ENCODE measurements at regions of chr2 and their contacts with region 1.

Region 1: GRCh38 chr2:24613154-24613814 is 122.2 kb downstream of the NCOA1 start:
- DNase-seq: peak; percentile 10 to 61
- H3K4me3 ChIP-seq: no peak overlapping the region
- H3K27ac ChIP-seq: peak overlapping the region; percentile 67; the same call in 1 of the 2 replicates
- H3K4me1 ChIP-seq: peaks cover 2 to 13% (median 4%) of the 10 kb centered on the region in 4 experiments
- H3K27me3 ChIP-seq: no peaks in the 10 kb centered on the region
- CTCF ChIP-seq: peak in 2 of 3 experiments; percentile 73 to 78; a peak in 3 of 4 replicates
- EP300 ChIP-seq: peak in 1 of 2 experiments; percentile 32; a peak in 1 of 3 replicates
- POLR2A ChIP-seq: no peak
- RAD21 ChIP-seq: peak; percentile 77 to 84

Region 2: DNA sequence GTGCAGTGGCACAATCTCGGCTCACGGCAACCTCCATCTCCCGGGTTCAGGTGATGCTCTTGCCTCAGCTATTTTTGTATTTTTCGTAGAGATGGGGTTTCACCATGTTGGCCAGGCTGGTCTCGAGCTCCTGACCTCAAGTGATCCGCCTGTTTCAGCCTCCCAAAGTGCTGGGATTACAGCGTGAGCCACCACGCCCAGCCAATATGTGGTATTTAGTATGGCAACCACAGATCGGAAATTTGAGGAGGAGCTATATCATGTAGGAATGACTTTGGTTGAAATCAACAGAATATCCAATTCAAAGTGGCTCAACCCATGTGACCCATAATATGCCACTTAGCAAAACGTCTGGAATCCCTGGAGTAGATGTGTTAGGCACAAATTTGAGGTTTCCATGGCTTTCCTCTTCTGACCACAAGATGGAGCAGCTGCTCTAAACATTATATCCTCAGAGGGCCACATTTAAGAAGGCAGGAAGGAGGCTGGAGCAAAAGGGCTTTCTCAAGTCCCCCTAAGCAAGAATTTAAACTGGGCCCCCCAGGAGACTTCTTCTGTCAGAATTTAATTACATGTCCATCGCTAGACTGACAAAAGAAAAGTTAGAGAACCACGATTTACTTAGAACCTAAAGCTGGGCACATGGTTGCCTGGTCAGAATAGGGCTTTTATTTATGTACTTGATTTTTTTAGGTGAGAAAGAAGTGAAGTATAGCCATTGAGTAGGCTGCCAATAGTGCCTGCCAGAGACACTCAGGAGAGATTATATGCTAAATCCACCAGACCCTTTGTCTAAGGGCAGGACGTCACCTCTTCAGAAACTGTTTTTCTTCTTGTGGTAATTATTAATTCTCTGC is 203.4 kb before region 1 on chr2:
- CTCF ChIA-PET with region 1: interaction called, 10 read pairs
- POLR2A ChIA-PET with region 1: no interaction called
- DNase-seq: no peak
- H3K4me3 ChIP-seq: no peak overlapping the region
- H3K27ac ChIP-seq: no peak overlapping the region
- H3K4me1 ChIP-seq: peaks cover 0 to 7% (median 3%) of the 10 kb centered on the region in 4 experiments; a peak in 2 of 7 replicates
- H3K27me3 ChIP-seq: no peaks in the 10 kb centered on the region
- CTCF ChIP-seq: peak in 2 of 3 experiments; percentile 76 to 90; a peak in 3 of 4 replicates
- EP300 ChIP-seq: no peak
- POLR2A ChIP-seq: no peak
- RAD21 ChIP-seq: peak; percentile 90 to 97

Region 3: DNA sequence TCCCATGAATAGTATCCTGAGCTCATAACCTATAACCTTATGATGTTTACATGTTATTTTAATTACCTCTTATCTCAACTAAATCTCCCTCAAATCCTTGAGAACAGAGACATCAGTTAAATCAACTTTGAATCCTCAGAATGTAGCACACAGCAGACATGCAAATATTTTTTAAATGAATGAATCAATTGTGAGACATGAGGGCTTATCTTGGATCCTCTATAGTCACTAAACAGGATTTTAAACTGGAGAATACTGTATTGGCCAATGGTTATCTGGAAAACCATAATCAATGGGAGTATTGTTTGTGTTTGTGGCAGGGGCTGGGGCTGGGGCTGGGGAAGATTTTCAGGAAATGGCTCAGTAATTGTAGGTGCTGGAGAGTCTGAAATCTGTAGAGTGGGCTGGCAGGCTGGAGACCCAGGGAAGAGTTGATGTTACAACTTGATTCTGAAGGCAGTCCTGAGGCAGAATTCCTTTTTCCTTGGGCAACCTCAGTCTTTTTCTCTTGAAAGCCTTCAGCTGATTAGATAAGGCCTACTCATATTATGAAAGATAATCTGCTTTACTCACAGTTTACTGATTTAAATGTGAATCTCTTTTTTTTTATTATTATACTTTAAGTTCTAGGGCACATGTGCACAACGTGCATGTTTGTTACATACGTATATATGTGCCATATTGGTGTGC is 16.0 kb before region 1 on chr2:
- CTCF ChIA-PET with region 1: interaction called, 15 read pairs
- POLR2A ChIA-PET with region 1: no interaction called
- DNase-seq: no peak
- H3K4me3 ChIP-seq: no peak overlapping the region
- H3K27ac ChIP-seq: no peak overlapping the region
- H3K4me1 ChIP-seq: peaks cover 0 to 4% (median under 1%) of the 10 kb centered on the region in 4 experiments; a peak in 3 of 7 replicates
- H3K27me3 ChIP-seq: no peaks in the 10 kb centered on the region
- CTCF ChIP-seq: no peak
- EP300 ChIP-seq: no peak
- POLR2A ChIP-seq: no peak
- RAD21 ChIP-seq: no peak

Region 4: GRCh38 chr2:24626131-24626530 is 12.8 kb after region 1 on chr2:
- CTCF ChIA-PET with region 1: interaction called, 22 read pairs
- POLR2A ChIA-PET with region 1: no interaction called
- DNase-seq: no peak
- H3K4me3 ChIP-seq: no peak overlapping the region
- H3K27ac ChIP-seq: no peak overlapping the region
- H3K4me1 ChIP-seq: no peaks in the 10 kb centered on the region; a peak in 1 of 7 replicates
- H3K27me3 ChIP-seq: no peaks in the 10 kb centered on the region
- CTCF ChIP-seq: no peak
- EP300 ChIP-seq: no peak
- POLR2A ChIP-seq: no peak
- RAD21 ChIP-seq: no peak

Region 5: GRCh38 chr2:24657818-24658217 is 44.5 kb after region 1 on chr2:
- CTCF ChIA-PET with region 1: no interaction called
- POLR2A ChIA-PET with region 1: no interaction called
- DNase-seq: no peak
- H3K4me3 ChIP-seq: no peak overlapping the region
- H3K27ac ChIP-seq: no peak overlapping the region
- H3K4me1 ChIP-seq: no peaks in the 10 kb centered on the region; a peak in 1 of 7 replicates
- H3K27me3 ChIP-seq: no peaks in the 10 kb centered on the region
- CTCF ChIP-seq: no peak
- EP300 ChIP-seq: no peak
- POLR2A ChIP-seq: no peak
- RAD21 ChIP-seq: no peak

Region 6: GRCh38 chr2:24739354-24740025 is 126.2 kb after region 1 on chr2:
- CTCF ChIA-PET with region 1: no interaction called
- POLR2A ChIA-PET with region 1: no interaction called
- DNase-seq: no peak
- H3K4me3 ChIP-seq: no peak overlapping the region
- H3K27ac ChIP-seq: no peak overlapping the region
- H3K4me1 ChIP-seq: no peaks in the 10 kb centered on the region
- H3K27me3 ChIP-seq: no peaks in the 10 kb centered on the region
- CTCF ChIP-seq: no peak
- EP300 ChIP-seq: no peak
- POLR2A ChIP-seq: no peak
- RAD21 ChIP-seq: no peak

Region 7: DNA sequence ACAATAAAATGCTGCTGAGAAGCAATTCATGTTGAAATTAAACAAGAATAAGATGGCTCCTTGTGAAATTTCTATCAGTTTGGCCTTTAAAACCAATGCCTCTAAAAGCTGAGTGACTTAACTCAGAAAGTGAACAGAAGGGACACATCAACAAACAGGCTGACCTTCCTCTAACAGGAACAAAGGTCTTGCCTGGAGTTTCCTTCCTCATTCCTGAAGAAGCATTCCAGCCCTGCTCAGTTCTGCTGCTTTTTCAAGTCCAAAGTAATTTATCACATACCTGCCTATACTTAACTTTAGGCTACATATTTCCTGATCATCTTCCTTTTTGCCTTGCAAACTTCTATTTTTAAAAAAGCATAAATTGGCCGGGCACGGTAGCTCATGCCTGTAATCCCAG is 165.8 kb after region 1 on chr2:
- CTCF ChIA-PET with region 1: interaction called, 13 read pairs
- POLR2A ChIA-PET with region 1: no interaction called
- DNase-seq: peak in 1 of 2 experiments; percentile 16
- H3K4me3 ChIP-seq: no peak overlapping the region
- H3K27ac ChIP-seq: no peak overlapping the region
- H3K4me1 ChIP-seq: peaks cover 0 to 5% (median 0%) of the 10 kb centered on the region in 4 experiments; a peak in 2 of 7 replicates
- H3K27me3 ChIP-seq: no peaks in the 10 kb centered on the region
- CTCF ChIP-seq: no peak
- EP300 ChIP-seq: no peak
- POLR2A ChIP-seq: no peak
- RAD21 ChIP-seq: no peak

Region 8: DNA sequence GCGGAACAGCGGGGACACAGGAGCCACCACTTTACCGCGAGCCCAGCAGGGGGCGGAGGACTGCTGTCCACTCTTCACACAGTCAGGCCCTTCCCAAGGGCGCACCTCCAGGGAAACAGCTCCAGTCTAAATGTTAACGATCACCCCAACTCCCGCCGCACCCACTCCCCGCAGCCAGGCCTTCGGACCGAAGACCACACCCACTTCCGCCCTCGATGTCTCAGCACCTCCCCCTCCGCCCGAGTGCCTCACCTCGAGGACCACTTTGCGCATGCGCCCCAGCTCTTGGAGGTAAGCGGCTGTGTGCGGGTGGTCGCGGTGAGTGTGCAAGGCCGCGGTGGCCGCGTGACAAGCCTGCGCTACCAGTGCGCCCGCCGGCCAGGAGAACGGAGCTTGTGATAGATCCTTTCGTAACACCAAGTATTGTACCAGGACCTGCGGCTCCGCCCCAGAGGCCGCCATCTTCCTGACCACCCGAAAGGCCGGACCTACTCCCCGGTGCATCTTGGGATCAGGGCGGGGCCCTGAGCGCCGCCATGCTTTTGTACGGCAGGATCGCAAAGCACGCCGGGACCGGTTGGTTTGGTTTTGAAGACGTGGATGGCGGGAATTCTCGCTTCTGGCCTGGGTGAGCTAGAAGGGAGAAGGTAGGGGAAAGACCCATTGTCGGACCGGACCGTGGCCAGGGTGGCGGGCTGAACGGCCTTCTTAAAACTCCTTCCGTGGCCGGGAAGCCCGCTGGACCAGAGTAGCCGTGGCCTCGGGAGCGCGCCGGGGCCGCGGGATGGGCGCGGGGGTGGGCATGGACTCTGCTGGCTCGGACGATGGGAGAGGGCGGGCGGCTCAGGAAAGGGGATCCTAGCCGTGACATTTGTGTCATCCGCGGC is 179.8 kb after region 1 on chr2 and contains the starts of genes CENPO and PTRHD1:
- CTCF ChIA-PET with region 1: interaction called, 16 read pairs
- POLR2A ChIA-PET with region 1: interaction called, 3 read pairs
- DNase-seq: peak; percentile 90 to 94
- H3K4me3 ChIP-seq: peak within 1 kb of the TSS; percentile 74 to 98 (median 86)
- H3K27ac ChIP-seq: peak within 1 kb of the TSS; percentile 100
- H3K4me1 ChIP-seq: peaks cover 0 to 7% (median 6%) of the 10 kb centered on the region in 4 experiments; a peak in 4 of 7 replicates
- H3K27me3 ChIP-seq: no peaks in the 10 kb centered on the region
- CTCF ChIP-seq: peak in 2 of 3 experiments; percentile 24 to 37; a peak in 2 of 4 replicates
- EP300 ChIP-seq: peak in 1 of 2 experiments; percentile 61; a peak in 1 of 3 replicates
- POLR2A ChIP-seq: peak; percentile 81 to 95
- RAD21 ChIP-seq: peak; percentile 22 to 28; a peak in 2 of 4 replicates
- total RNA-seq, gene CENPO: 46.3 and 47.0 TPM in 2 replicates
- total RNA-seq, gene PTRHD1: 46.2 and 48.6 TPM in 2 replicates

Region 9: DNA sequence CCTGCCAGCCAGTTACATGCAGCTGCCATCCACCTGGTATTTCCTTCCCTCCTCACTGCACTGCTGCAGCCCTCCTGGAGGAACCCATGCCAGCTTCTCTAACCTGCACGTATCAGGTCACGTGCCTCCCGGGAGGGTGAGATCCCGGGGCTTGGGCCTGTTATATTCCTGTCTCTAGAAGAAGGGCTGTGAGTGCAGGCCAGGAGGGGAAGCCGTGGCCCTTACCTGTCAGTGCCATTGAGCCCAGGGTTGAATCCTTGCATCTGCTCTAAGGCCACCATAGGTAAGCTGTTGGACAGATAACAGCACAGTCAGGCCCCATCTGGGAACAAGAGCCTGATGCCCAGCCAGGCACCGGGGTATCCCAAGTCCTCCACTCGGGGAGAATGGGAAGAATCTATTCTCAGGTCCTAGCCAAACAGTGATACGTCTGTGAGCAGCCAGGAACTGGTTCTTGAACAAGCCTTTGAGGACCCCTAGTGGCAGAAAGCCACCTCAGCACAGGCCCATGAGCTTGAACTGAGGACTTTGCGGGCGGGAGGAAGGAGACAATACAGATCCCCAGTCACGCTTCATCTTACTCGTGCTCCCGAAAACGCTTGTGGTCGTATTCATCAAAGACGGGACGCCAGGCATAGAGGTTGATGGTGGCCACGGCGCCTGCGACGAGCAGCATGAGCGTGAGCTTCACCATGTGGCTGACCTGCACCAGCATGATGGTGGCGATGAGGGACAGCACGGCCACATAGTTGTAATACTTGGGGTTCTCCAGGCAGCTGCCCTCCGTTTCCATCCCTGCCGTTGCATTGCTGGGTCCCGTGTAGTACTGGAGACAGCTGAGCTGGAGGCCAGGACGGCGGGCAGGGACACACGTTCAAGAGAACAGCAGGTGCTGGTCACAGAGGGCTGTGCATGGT is 214.3 kb after region 1 on chr2:
- CTCF ChIA-PET with region 1: interaction called, 30 read pairs
- POLR2A ChIA-PET with region 1: no interaction called
- DNase-seq: peak; percentile 79 to 81
- H3K4me3 ChIP-seq: no peak overlapping the region
- H3K27ac ChIP-seq: no peak overlapping the region; the same call in 1 of the 2 replicates
- H3K4me1 ChIP-seq: peaks cover 1 to 18% (median 11%) of the 10 kb centered on the region in 4 experiments; a peak in 6 of 7 replicates
- H3K27me3 ChIP-seq: no peaks in the 10 kb centered on the region
- CTCF ChIP-seq: peak in 2 of 3 experiments; percentile 88 to 96; a peak in 3 of 4 replicates
- EP300 ChIP-seq: no peak
- POLR2A ChIP-seq: no peak; a peak in 1 of 3 replicates
- RAD21 ChIP-seq: peak; percentile 94 to 96

Region 10: GRCh38 chr2:24871852-24872323 is 258.6 kb after region 1 on chr2:
- CTCF ChIA-PET with region 1: no interaction called
- POLR2A ChIA-PET with region 1: no interaction called
- DNase-seq: no peak
- H3K4me3 ChIP-seq: no peak overlapping the region
- H3K27ac ChIP-seq: no peak overlapping the region
- H3K4me1 ChIP-seq: peaks cover 0 to 8% (median under 1%) of the 10 kb centered on the region in 4 experiments; a peak in 2 of 7 replicates
- H3K27me3 ChIP-seq: no peaks in the 10 kb centered on the region
- CTCF ChIP-seq: no peak
- EP300 ChIP-seq: no peak
- POLR2A ChIP-seq: no peak
- RAD21 ChIP-seq: no peak